ENCODE measurements at regions of chr17 and their contacts with region 1.

Region 1: GRCh38 chr17:39769974-39770587 is 32.3 kb downstream of the GRB7 start:
- DNase-seq: peak; percentile 86
- H3K4me3 Mint-ChIP-seq: peak overlapping the region; percentile 13
- H3K27ac Mint-ChIP-seq: peak overlapping the region; percentile 74
- H3K4me1 Mint-ChIP-seq: peaks cover 69% of the 10 kb centered on the region
- H3K27me3 Mint-ChIP-seq: no peaks in the 10 kb centered on the region

Region 2: GRCh38 chr17:39794249-39794970 is 24.3 kb after region 1 on chr17:
- intact Hi-C with region 1: loop called (anchors 1 kb)
- DNase-seq: peak; percentile 75
- H3K4me3 Mint-ChIP-seq: peak overlapping the region; percentile 76
- H3K27ac Mint-ChIP-seq: peak overlapping the region; percentile 81
- H3K4me1 Mint-ChIP-seq: peaks cover 55% of the 10 kb centered on the region
- H3K27me3 Mint-ChIP-seq: no peaks in the 10 kb centered on the region

Region 3: DNA sequence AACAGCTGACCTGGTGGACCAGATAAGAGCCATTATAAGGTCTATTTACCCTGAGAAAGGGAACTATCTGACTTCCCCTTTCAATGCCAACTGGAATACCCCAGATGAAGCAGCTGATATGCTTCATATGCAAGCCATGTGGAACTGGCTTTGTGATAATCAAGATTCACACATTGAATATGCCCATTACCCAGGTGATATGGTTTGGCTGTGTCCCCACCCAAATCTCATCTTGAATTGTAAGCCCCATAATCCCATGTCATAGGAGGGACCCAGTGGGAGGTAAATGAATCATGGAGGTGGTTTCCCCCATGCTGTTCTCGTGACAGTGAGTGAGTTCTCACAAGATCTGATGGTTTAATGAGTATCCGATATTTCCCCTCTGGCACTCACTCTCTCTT is 52.0 kb after region 1 on chr17:
- intact Hi-C with region 1: loop called (anchors 1 kb)
- DNase-seq: peak; percentile 54
- H3K4me3 Mint-ChIP-seq: no peak overlapping the region
- H3K27ac Mint-ChIP-seq: no peak overlapping the region
- H3K4me1 Mint-ChIP-seq: peaks cover 26% of the 10 kb centered on the region
- H3K27me3 Mint-ChIP-seq: no peaks in the 10 kb centered on the region

Region 4: DNA sequence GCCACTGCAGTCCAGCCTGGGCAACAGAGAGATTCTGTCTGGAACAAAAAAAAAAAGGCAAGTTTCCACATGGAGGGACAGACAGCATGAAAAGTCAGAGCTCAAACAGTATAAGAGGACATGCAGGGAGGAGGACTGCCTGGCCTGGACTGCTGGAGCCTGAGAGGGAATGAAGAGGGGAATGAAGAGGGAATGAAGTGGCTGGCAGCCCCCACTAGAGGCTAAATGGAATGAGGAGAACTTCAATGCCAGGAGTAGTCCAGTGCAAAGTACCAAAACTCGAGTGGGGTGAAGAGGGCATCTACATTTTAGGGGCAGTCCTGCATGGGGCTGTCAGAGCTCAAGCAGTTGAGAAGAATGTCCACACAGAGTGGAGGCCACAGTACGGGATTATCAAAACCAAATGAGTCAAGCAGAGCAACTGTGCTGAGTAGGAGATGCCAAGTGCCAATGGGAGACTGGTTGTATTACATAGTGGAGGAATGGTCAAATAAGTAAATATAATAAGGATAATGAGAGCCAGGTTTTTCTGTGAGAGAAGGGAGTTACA is 71.1 kb after region 1 on chr17:
- intact Hi-C with region 1: loop called (anchors 5 kb)
- DNase-seq: peak; percentile 48
- H3K4me3 Mint-ChIP-seq: no peak overlapping the region
- H3K27ac Mint-ChIP-seq: no peak overlapping the region
- H3K4me1 Mint-ChIP-seq: peaks cover 22% of the 10 kb centered on the region
- H3K27me3 Mint-ChIP-seq: no peaks in the 10 kb centered on the region

Measured in activated CD4-positive, alpha-beta T cell treated with anti-CD3 and anti-CD28 coated beads, Interleukin-2, amount 10 ng/mL, durations not matched to agents 24 days and 14 days (primary cell).